MCF 10A (cell line): ENCODE measurements at regions of chr20 and their contacts with region 1.

Region 1: DNA sequence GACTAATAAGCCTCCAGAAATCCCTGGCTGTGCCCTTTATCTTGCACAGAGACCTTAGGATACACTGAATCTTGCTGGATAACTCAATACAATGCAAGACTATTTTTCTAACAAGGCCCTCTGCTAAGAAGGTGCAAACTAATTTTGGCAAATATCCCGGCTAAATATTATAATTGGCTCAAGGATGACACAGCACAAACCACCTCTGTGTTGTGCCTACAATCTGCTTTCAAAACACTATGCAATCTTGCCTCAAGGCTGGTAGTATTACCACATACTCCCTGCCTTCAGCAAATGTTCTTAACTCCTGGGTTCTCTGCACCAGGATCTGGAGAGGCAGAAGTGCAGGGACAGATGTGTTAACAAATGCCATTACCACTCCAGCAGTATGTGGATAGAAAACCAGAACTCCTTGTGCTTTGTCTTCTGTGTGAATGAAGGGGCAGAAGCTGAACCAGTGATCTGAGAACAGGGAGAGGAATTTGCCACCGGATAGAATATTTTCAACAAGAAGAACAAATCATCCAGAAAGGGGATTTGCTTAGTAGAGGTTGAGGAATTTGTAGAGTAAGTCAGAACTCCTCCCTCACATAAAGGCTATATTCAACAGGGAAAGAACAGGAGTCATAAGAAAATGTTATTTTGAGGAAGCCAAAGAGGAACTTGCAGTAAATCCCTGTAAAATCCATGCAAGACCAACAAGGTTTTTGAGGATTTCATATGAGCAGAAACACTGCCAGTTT is 74.1 kb upstream of the SLC4A11 start:
- DNase-seq: peak; percentile 95
- H3K4me3 Mint-ChIP-seq: peak overlapping the region; percentile 61
- H3K27ac Mint-ChIP-seq: peak overlapping the region; percentile 95
- H3K4me1 Mint-ChIP-seq: peaks cover 39% of the 10 kb centered on the region
- H3K27me3 Mint-ChIP-seq: no peaks in the 10 kb centered on the region
- CTCF ChIP-seq: no peak

Region 2: DNA sequence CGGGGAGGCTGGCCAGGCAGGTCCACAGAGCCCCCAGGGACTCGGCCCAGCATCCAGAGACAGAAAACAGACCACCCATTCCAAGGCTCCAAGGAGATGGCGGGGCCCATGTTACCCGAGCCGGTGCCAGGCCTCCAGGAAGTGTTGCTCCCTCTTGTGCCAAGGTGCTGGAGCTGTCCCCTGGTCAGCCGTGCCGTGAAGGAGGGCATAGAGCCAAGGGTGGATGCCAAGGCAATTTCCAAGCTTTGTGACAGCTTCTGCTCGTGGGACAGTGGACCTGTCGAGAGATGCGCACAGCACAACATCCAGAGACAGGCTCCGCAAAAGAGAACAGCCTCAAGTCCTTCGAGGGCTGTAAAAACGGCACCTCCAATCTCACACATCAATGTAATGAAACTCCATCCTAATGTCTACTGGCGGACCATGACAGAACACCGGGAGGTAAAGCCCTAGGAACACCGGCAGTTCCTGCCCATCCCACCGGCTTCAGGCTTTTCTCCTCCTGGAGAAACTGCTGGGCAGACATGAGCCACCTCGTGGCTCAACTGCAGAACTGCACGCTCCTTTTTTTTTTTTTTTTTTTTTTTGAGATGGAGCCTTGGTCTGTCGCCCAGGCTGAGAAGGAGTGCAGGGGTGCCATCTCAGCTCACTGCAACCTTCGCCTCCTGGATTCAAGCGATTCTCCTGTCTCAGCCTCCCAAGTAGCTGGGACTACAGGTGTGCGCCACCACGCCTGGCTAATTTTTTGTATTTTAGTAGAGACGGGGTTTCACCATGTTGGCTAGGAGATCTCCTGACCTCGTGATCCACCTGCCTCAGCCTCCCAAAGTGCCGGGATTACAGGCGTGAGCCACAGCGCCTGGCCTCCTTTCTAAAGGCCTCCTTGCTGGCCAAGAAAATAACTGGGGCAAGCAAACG is 197.7 kb before region 1 on chr20:
- CTCF ChIA-PET with region 1: interaction called, 20 read pairs
- POLR2A ChIA-PET with region 1: interaction called, 3 read pairs
- intact Hi-C with region 1: loop called (anchors 5 kb)
- DNase-seq: peak; percentile 52
- H3K4me3 Mint-ChIP-seq: no peak overlapping the region
- H3K27ac Mint-ChIP-seq: no peak overlapping the region
- H3K4me1 Mint-ChIP-seq: peaks cover 8% of the 10 kb centered on the region
- H3K27me3 Mint-ChIP-seq: no peaks in the 10 kb centered on the region
- CTCF ChIP-seq: peak; percentile 47

Region 3: GRCh38 chr20:3204124-3204822 is 108.8 kb before region 1 on chr20 and contains the start of gene DDRGK1:
- CTCF ChIA-PET with region 1: interaction called, 14 read pairs
- POLR2A ChIA-PET with region 1: interaction called, 37 read pairs
- intact Hi-C with region 1: no loop called
- DNase-seq: peak; percentile 87
- H3K4me3 Mint-ChIP-seq: peak within 1 kb of the TSS; percentile 92
- H3K27ac Mint-ChIP-seq: peak within 1 kb of the TSS; percentile 98
- H3K4me1 Mint-ChIP-seq: no peaks in the 10 kb centered on the region
- H3K27me3 Mint-ChIP-seq: no peaks in the 10 kb centered on the region
- CTCF ChIP-seq: no peak
- total RNA-seq, gene DDRGK1: 116 and 136 TPM in 2 replicates

Region 4: GRCh38 chr20:3218307-3218988 is 94.7 kb before region 1 on chr20:
- CTCF ChIA-PET with region 1: interaction called, 192 read pairs
- POLR2A ChIA-PET with region 1: interaction called, 11 read pairs
- intact Hi-C with region 1: loop called (anchors 1 kb)
- DNase-seq: peak; percentile 60
- H3K4me3 Mint-ChIP-seq: no peak overlapping the region
- H3K27ac Mint-ChIP-seq: no peak overlapping the region
- H3K4me1 Mint-ChIP-seq: peaks cover 4% of the 10 kb centered on the region
- H3K27me3 Mint-ChIP-seq: no peaks in the 10 kb centered on the region
- CTCF ChIP-seq: peak; percentile 98

Region 5: GRCh38 chr20:3296261-3297078 is 16.6 kb before region 1 on chr20:
- CTCF ChIA-PET with region 1: interaction called, 6 read pairs
- POLR2A ChIA-PET with region 1: interaction called, 10 read pairs
- intact Hi-C with region 1: no loop called
- DNase-seq: no peak
- H3K4me3 Mint-ChIP-seq: no peak overlapping the region
- H3K27ac Mint-ChIP-seq: no peak overlapping the region
- H3K4me1 Mint-ChIP-seq: no peaks in the 10 kb centered on the region
- H3K27me3 Mint-ChIP-seq: no peaks in the 10 kb centered on the region
- CTCF ChIP-seq: no peak

Region 6: DNA sequence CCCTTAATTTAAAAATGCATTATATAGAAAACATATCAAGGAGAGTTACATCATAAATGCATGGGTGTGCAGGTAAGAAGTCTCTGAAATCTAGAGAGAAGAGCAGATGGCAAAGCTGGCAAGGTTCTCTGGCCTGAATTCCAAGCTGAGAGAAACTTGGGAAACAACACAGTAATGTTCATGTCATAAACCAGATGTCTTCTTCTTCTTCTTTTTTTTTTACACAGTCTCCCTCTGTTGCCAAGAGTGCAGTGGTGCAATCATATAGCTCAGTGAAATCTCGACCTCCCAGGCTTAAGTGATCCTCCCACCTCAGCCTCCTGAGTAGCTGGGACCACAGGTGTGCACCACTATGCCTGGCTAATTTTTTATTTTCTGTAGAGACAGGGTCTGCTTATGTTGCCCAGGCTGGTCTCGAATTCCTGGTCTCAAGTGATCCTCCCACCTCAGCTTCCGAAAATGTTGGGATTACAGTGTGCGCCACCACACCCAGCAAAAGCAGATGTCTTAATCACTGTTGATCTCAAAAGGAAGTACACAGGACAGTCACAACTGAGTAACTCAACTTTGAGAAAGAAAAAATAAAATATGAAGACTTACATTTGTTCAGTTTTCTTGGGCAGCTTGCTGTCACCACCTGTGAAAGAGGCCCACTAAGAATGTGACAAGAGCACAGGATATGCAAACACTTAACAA is 17.1 kb after region 1 on chr20:
- CTCF ChIA-PET with region 1: interaction called, 16 read pairs
- POLR2A ChIA-PET with region 1: interaction called, 18 read pairs
- intact Hi-C with region 1: no loop called
- DNase-seq: peak; percentile 24
- H3K4me3 Mint-ChIP-seq: no peak overlapping the region
- H3K27ac Mint-ChIP-seq: peak overlapping the region; percentile 19
- H3K4me1 Mint-ChIP-seq: no peaks in the 10 kb centered on the region
- H3K27me3 Mint-ChIP-seq: no peaks in the 10 kb centered on the region
- CTCF ChIP-seq: no peak

Region 7: DNA sequence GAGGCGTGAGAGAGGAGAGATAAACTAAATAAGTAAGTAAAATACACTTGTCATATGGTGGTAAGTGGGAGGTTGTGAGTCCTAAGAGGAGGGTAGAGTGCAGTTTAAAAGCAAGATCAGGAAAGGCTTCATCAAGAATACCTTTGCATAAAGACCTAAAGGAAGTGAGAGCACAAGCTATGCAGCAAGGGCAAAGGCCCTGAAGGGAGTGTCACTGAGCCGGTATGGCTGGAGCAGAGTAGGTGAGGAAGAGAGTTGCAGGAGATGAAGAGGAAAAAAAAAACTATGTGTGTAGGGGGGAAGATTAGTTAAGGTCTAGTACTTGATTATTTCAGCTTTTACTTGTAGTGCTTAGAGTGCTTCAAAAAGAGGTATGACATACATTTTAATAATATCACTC is 83.4 kb after region 1 on chr20:
- CTCF ChIA-PET with region 1: no interaction called
- POLR2A ChIA-PET with region 1: no interaction called
- intact Hi-C with region 1: no loop called
- DNase-seq: no peak
- H3K4me3 Mint-ChIP-seq: no peak overlapping the region
- H3K27ac Mint-ChIP-seq: no peak overlapping the region
- H3K4me1 Mint-ChIP-seq: peaks cover 5% of the 10 kb centered on the region
- H3K27me3 Mint-ChIP-seq: no peaks in the 10 kb centered on the region
- CTCF ChIP-seq: no peak

Region 8: DNA sequence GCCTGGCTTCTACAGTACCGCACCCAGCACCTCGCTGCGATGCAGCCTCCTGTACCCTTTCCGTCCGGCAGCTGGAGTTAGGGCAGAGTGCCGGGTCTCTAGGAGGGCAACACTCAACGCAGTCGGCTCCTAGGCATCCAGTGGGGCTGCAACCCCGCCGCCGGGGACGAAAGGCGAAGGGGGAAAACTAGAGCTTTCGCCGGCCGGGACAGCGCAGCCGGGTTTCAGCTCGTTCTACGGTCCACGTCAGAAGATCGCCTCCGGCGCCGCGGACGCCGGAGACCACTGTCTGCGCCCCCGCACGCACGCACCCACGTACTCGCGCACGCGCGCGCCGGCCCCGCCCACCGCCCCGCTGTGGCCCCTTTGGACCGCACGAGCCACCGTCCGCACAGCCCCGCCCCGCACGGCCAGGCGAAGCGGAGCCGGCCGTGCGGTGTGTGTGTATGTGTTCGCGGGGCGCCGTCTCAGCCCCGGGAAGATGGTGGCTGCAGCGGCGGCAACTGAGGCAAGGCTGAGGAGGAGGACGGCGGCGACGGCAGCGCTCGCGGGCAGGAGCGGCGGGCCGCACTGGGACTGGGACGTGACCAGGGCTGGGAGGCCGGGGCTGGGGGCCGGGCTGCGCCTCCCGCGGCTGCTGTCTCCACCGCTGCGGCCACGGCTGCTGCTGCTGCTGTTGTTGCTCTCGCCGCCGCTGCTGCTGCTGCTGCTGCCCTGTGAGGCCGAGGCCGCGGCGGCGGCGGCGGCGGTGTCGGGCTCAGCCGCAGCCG is 157.7 kb after region 1 on chr20 and contains the start of gene ATRN:
- CTCF ChIA-PET with region 1: interaction called, 3 read pairs
- POLR2A ChIA-PET with region 1: interaction called, 11 read pairs
- intact Hi-C with region 1: no loop called
- DNase-seq: peak; percentile 84
- H3K4me3 Mint-ChIP-seq: peak within 1 kb of the TSS; percentile 94
- H3K27ac Mint-ChIP-seq: peak within 1 kb of the TSS; percentile 96
- H3K4me1 Mint-ChIP-seq: peaks cover 26% of the 10 kb centered on the region
- H3K27me3 Mint-ChIP-seq: peaks cover 15% of the 10 kb centered on the region
- CTCF ChIP-seq: no peak
- total RNA-seq, gene ATRN: 29.7 and 34.7 TPM in 2 replicates